BJ (cell line): ENCODE measurements at regions of chr22 and their contacts with region 1.

Region 1: GRCh38 chr22:35930933-35931332 is 97.7 kb downstream of the RBFOX2 start:
- DNase-seq: no peak
- H3K4me3 ChIP-seq: no peak overlapping the region
- H3K27me3 ChIP-seq: no peaks in the 10 kb centered on the region
- CTCF ChIP-seq: peak; percentile 74

Region 2: DNA sequence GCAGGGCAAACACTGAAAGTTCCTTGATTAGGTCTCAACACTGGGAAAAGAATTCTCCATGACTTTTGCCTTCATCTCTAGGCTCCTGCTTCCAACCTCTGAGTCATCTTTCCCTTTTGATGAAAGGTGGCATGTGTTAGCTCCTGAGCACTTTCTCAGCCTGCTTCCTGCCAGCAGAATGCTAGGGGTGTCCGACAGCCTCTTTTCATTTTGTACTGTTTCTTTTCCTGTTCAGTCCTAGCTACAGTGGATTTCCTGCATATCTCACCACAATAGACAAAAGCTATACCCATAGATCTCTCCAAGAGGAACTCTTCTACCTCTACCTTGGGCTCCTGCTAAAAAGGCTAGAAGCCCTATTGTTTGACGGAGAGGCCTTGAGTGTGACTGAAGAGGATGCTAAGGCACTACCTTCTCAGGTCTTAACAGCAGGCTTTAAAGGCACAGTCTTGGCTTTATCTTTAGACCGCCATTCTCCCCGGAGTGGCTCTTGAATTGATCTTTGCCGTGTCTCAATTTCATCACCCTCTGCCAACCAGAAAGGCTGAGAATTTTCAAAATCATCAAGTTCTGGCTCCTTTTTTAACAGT is 47.8 kb before region 1 on chr22:
- CTCF ChIA-PET with region 1: no interaction called
- POLR2A ChIA-PET with region 1: no interaction called
- DNase-seq: no peak
- H3K4me3 ChIP-seq: no peak overlapping the region
- H3K27me3 ChIP-seq: no peaks in the 10 kb centered on the region
- CTCF ChIP-seq: no peak

Region 3: DNA sequence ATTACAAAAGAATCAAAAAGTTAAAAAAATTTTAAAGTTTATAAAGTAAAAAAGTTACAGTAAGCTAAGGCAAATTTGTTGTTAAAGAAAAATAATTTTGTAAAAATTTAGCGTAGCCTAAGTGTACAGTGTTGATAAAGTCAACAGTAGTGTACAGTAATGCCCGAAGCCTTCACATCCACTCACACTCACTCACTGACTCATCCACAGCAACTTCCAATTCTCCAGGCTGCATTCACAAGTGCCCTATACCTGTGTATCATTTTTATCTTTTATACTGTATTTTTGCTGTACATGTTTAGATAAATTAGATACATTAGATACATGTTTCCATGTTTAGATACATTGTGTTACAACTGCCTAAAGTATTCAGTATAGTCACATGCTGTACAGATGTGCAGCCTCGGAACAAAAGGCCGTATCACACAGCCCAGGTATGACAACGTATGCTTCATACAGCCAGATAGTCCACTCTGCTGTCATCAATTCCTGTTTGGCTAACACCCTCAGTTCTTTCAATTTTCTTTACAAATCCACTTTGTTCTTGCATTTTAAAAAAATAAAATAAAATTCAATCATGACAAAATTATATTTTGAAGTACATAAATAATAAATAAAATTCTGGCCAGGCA is 17.0 kb after region 1 on chr22:
- CTCF ChIA-PET with region 1: interaction called, 5 read pairs
- POLR2A ChIA-PET with region 1: interaction called, 18 read pairs
- DNase-seq: no peak
- H3K4me3 ChIP-seq: no peak overlapping the region
- H3K27me3 ChIP-seq: no peaks in the 10 kb centered on the region
- CTCF ChIP-seq: no peak

Region 4: GRCh38 chr22:35961480-35962295 is 30.8 kb after region 1 on chr22:
- CTCF ChIA-PET with region 1: interaction called, 12 read pairs
- POLR2A ChIA-PET with region 1: no interaction called
- DNase-seq: no peak
- H3K4me3 ChIP-seq: no peak overlapping the region
- H3K27me3 ChIP-seq: no peaks in the 10 kb centered on the region
- CTCF ChIP-seq: no peak

Region 5: GRCh38 chr22:35987487-35987886 is 56.6 kb after region 1 on chr22:
- CTCF ChIA-PET with region 1: interaction called, 10 read pairs
- POLR2A ChIA-PET with region 1: no interaction called
- DNase-seq: no peak
- H3K4me3 ChIP-seq: no peak overlapping the region
- H3K27me3 ChIP-seq: no peaks in the 10 kb centered on the region
- CTCF ChIP-seq: no peak

Region 6: GRCh38 chr22:36017651-36018091 is 86.7 kb after region 1 on chr22:
- CTCF ChIA-PET with region 1: interaction called, 12 read pairs
- POLR2A ChIA-PET with region 1: no interaction called
- DNase-seq: no peak
- H3K4me3 ChIP-seq: no peak overlapping the region
- H3K27me3 ChIP-seq: no peaks in the 10 kb centered on the region
- CTCF ChIP-seq: no peak

Region 7: DNA sequence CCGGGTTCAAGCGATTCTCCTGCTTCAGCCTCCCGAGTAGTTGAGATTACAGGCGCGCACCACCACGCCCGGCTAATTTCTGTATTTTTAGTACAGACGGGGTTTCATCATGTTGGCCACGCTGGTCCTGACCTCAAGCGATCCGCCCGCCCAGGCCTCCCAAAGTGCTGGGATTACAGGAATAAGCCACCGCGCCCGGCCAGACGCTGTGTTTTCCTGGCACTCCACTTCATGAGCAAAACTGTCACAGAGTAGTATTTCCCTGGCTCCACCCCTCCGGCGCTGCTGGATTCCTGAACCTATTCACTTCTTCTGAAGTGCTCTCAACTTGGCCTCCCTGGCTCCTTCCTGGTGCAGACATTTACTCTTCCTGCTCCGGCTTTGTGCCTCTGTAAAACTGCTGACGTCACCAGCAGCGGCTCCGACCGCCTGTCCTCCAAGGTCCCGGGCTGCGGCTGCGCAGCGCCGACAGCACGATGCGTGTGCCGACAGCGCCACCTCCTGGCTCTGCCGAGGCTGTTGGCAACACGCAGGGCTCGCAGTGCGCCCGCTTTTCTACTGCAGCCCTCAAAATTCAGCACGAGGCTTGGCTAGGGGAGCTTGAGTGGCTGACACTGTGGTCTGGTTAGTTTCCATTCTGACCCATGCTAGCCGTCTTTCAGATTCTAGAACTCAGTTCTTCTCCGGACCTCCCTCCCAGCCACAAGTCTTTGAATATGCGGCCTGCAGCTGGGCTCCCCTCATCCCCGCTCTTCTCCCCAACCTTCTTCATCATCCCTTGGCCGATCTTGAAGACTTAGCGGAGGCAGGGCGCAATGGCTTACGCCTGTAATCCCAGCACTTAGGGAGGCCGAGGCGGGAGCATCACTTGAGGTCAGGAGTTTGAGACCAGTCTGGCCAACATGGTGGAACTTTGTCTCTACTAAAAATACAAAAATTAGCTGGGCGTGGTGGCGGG is 193.0 kb after region 1 on chr22:
- CTCF ChIA-PET with region 1: interaction called, 16 read pairs
- POLR2A ChIA-PET with region 1: no interaction called
- DNase-seq: peak; percentile 58
- H3K4me3 ChIP-seq: peak overlapping the region; percentile 10; the same call in 1 of the 2 replicates
- H3K27me3 ChIP-seq: 0 out of 2 replicates have a peak, but pooled peaks cover 1% of the 10 kb centered on the region
- CTCF ChIP-seq: peak; percentile 99